ENCODE measurements at regions of chr22 and their contacts with region 1.

Region 1: DNA sequence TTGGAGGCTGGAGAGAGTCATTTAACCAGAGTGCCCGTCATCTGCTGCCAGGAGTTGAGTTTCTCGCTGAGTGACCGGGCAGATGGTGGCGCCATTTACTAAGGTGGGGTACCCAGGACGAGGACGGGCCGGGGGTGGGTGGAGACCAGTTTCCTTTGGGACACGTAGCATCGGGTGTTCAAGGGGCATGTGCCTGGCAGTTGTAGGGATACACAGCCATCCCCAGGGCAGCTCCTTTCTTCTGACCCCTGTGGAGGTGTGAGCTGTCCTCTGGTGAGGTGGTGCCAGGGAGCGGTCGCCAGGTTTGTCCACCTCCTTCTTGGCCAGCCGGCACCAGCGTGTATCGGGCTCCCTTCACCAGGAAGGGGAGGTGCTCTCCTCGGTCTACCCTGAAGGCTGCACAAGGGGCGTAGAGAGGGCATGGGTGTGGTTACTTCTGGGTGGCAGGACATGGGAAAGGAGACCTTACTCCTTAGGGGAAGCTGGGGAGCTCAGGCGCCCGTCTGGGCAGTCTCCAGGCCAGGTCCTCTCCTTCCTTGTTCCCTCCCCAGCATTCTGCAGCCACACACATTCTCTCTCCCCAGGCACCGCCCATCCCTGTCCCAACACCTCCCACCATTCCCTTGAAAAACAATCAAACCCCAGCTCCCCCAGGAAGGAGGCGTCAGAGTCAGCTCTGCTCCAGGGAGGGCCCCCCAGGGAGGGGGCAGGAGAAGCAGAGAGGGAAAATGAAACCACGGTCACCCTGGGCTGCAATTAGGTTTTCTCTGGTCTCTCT is 10.3 kb upstream of the MB start:
- DNase-seq: peak; percentile 87 to 91 (median 88)
- ATAC-seq: peak; percentile 88
- H3K4me3 ChIP-seq: peak overlapping the region; percentile 16 to 31
- H3K27ac ChIP-seq: peak overlapping the region; percentile 84 to 99 (median 95)
- H3K4me1 ChIP-seq: peaks cover 23% of the 10 kb centered on the region
- H3K27me3 ChIP-seq: no peaks in the 10 kb centered on the region
- CTCF ChIP-seq: peak; percentile 24 to 78 (median 49)
- POLR2A ChIP-seq: peak; percentile 71 to 97 (median 92)

Region 2: DNA sequence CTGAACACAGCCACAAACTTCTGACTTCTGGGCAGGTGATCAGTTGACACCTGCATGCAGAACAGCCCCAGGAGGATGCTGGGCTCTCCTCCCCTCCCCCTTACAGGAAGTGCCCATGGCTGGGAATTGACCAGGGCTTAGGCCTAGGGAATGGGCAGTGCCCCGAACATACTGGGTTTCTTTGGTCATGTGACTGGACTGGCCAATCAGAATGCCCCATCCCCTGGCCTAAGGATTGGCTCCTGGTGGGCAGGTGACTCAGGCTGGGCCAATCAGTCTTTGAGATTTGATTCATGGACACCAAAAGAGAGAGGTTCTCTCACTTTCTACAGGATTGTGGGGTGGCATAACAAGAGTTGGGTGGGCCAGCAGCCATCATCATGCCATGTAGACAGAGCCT is 190.4 kb before region 1 on chr22:
- intact Hi-C with region 1: no loop called
- DNase-seq: no peak
- ATAC-seq: no peak
- H3K4me3 ChIP-seq: no peak overlapping the region
- H3K27ac ChIP-seq: no peak overlapping the region
- H3K4me1 ChIP-seq: no peaks in the 10 kb centered on the region
- H3K27me3 ChIP-seq: no peaks in the 10 kb centered on the region
- CTCF ChIP-seq: no peak
- POLR2A ChIP-seq: no peak

Region 3: GRCh38 chr22:35498026-35498800 is 129.2 kb before region 1 on chr22:
- intact Hi-C with region 1: no loop called
- DNase-seq: no peak
- ATAC-seq: no peak
- H3K4me3 ChIP-seq: no peak overlapping the region
- H3K27ac ChIP-seq: no peak overlapping the region
- H3K4me1 ChIP-seq: no peaks in the 10 kb centered on the region
- H3K27me3 ChIP-seq: peaks cover 0 to 5% of the 10 kb centered on the region in 2 donors
- CTCF ChIP-seq: no peak
- POLR2A ChIP-seq: no peak

Region 4: GRCh38 chr22:35821654-35822053 is 194.2 kb after region 1 on chr22:
- intact Hi-C with region 1: no loop called
- DNase-seq: no peak
- ATAC-seq: no peak
- H3K4me3 ChIP-seq: no peak overlapping the region
- H3K27ac ChIP-seq: no peak overlapping the region
- H3K4me1 ChIP-seq: peaks cover 5% of the 10 kb centered on the region
- H3K27me3 ChIP-seq: no peaks in the 10 kb centered on the region
- CTCF ChIP-seq: no peak
- POLR2A ChIP-seq: no peak

Region 5: DNA sequence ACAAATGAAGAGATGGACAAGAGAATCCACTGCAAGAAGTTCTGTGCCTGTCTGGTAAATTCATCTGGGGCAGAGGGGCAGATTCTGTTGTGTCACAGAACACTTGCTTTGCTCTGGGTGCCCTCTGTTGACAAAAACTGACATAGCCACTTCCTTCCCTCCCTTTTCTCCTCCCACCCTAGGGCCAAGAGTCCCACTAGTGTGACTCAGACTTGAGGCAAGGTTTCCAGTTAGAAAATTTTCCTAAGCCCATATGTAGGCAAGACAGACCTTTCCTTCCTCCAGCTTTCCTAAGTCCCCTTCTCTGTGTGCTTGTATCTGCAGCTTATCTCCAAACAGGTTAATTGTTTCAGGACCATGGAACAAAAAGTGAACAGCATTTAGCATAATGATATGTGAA is 294.3 kb after region 1 on chr22:
- intact Hi-C with region 1: loop called (anchors 10 kb)
- DNase-seq: peak; percentile 66 to 82 (median 78)
- ATAC-seq: peak; percentile 94
- H3K4me3 ChIP-seq: no peak overlapping the region
- H3K27ac ChIP-seq: peak overlapping the region; percentile 6 to 65 (median 30)
- H3K4me1 ChIP-seq: peaks cover 14% of the 10 kb centered on the region
- H3K27me3 ChIP-seq: no peaks in the 10 kb centered on the region
- CTCF ChIP-seq: peak; percentile 37 to 78 (median 64)
- POLR2A ChIP-seq: no peak